Adrenal gland (tissue), 19 donors: ENCODE measurements at regions of chr22 and their contacts with region 1.

Region 1: DNA sequence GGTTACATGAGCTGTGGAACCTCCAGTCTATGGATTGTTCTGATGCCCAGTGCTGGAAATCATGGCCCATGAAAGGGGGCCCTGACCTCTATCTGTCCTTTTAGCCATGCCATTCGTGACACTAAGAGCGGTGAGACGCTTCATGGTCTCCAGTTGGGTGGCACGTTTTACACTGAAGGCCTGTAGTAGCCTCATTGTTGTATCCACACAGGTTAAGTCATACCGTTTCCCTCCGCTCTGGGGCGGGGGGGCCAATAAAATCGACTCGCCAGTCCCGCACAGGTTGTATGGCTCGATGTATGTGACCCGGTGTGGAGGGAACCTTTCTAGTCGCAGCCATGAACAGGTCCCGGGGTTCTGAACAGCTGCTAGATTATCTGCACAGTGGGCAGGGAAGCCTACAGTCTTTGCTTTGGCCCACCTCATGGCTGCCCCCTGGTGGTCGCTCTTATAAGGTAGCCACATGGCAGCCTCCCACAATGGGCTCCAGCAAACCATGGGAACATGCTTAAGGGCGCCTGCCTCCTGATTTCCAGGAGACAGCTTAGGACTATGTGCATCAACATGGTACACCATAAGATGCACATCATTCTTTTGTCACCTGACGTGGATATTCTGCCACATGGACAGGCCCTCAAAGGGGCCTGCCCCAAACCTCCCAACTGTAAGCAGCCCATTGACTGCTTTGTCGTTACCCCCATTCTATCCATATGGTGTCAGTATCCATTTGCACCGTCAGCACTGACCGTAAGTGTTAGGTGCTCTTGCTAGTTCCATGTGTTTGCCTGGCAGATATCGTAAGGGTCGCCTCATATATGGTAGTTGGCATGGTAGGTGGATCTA is 19.7 kb upstream of the APOL3 start:
- DNase-seq: peak; percentile 81 to 96 (median 91)
- H3K4me3 ChIP-seq: no peak overlapping the region
- H3K27ac ChIP-seq: no peak overlapping the region
- H3K4me1 ChIP-seq: no peaks in the 10 kb centered on the region
- H3K27me3 ChIP-seq: no peaks in the 10 kb centered on the region
- CTCF ChIP-seq: peak; percentile 83 to 92 (median 86)
- POLR2A ChIP-seq: no peak

Region 2: DNA sequence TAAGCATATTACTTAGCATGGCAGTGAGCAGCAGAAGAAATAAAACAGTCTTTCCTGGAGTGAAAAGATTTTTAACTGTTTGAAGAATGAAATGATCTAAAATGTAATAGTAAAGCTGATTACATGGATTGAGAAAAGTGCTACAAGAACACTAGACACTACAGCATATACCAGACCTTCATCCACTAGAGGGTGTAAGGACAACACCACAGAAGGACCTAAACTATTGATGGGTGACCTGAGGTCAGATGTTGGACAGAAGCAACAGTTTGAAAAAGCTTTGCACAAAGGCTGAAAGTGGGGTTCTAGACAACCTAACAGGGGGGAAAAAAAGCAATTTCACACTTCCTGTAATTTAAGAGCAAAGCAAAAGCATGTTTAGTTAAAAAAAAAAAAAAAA is 249.3 kb before region 1 on chr22:
- intact Hi-C with region 1: no loop called
- DNase-seq: peak in 4 of 7 donors; percentile 33 to 43 (median 38)
- H3K4me3 ChIP-seq: no peak overlapping the region
- H3K27ac ChIP-seq: no peak overlapping the region
- H3K4me1 ChIP-seq: no peaks in the 10 kb centered on the region
- H3K27me3 ChIP-seq: no peaks in the 10 kb centered on the region
- CTCF ChIP-seq: peak; percentile 43 to 91 (median 80)
- POLR2A ChIP-seq: no peak

Region 3: GRCh38 chr22:36144886-36145541 is 35.2 kb before region 1 on chr22:
- intact Hi-C with region 1: loop called (anchors 2 to 5 kb)
- DNase-seq: peak; percentile 68 to 91 (median 81)
- H3K4me3 ChIP-seq: no peak overlapping the region
- H3K27ac ChIP-seq: peak overlapping the region in 1 of 5 donors; percentile 15
- H3K4me1 ChIP-seq: peaks cover 5 to 10% of the 10 kb centered on the region in 2 donors
- H3K27me3 ChIP-seq: no peaks in the 10 kb centered on the region
- CTCF ChIP-seq: peak; percentile 81 to 94 (median 88)
- POLR2A ChIP-seq: no peak

Region 4: GRCh38 chr22:36301384-36301828 is 121.1 kb after region 1 on chr22:
- intact Hi-C with region 1: no loop called
- DNase-seq: peak; percentile 66 to 91 (median 80)
- H3K4me3 ChIP-seq: no peak overlapping the region
- H3K27ac ChIP-seq: no peak overlapping the region
- H3K4me1 ChIP-seq: no peaks in the 10 kb centered on the region
- H3K27me3 ChIP-seq: no peaks in the 10 kb centered on the region
- CTCF ChIP-seq: peak; percentile 88 to 96 (median 93)
- POLR2A ChIP-seq: no peak